Kidney (tissue), 22 donors: ENCODE measurements at regions of chr5 and their contacts with region 1.

Region 1: GRCh38 chr5:112419986-112420864 is 1.1 kb upstream of the EPB41L4A start:
- DNase-seq: peak; percentile 94 to 95 (median 94)
- H3K4me3 ChIP-seq: peak overlapping the region; percentile 68 to 88 (median 86)
- H3K27ac ChIP-seq: peak overlapping the region; percentile 76 to 87
- H3K4me1 ChIP-seq: no peaks in the 10 kb centered on the region
- H3K27me3 ChIP-seq: no peaks in the 10 kb centered on the region
- CTCF ChIP-seq: peak; percentile 89

Region 2: DNA sequence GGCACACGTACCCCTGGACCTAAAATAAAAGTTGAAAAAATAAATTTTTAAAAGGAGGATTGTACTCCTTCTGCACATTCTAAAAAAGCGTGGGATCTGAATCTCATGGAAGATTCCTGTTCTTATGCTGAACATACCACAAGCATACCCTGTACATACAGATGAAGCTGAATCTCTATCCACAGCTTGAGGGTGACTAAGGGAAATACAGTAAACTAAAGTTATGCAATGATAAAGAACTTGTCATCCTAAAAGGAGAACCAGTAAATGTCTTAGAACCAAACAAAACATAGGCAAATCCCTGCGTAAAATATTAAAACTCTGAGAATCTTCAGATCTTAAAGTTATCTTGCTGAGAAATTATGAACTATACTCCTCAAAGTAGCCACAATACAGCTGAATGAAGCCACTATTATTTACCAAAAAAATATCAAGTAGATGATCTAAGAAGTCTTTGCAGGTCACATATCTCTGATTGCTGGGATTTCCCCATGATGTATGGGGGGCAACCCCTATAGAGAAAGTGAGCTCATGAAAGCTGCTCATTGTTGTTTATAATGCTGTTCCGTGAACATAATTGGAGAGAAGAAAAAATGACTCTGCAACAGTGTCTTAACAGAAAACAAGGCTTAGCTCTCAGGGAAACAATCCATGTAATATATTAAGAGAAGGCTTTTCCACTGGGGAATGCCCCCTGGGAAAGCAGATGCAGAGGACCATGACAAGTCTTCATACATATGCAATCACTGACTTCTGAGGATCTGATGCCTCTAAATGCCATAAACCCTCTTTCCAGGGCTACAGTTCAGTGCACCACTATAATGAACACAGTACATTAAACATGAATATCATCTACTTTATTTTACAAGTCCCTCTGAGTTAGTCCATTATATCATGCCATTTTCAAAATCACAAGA is 211.3 kb before region 1 on chr5:
- intact Hi-C with region 1: loop called (anchors 10 kb)
- DNase-seq: peak in 3 of 5 donors; percentile 28 to 62 (median 58)
- H3K4me3 ChIP-seq: no peak overlapping the region
- H3K27ac ChIP-seq: no peak overlapping the region
- H3K4me1 ChIP-seq: no peaks in the 10 kb centered on the region
- H3K27me3 ChIP-seq: no peaks in the 10 kb centered on the region
- CTCF ChIP-seq: no peak

Region 3: DNA sequence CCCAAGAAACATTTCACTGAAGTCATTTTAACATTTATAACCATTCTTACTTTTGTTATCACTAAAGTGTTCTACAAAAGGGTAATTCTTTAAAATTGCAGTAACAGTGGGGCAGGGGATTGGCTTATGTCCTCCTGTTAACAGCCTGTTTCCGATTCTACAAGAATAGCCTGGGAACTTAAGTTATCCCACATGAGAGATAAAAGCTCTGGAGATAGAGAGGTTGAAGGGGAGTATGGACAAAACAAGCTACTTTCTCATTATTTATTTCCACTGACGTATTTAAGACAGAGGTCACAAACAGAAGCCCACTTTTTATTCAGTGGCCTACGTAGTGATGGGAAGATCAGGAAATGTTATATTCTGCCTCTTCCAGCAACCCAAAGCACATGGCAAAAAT is 99.8 kb before region 1 on chr5:
- intact Hi-C with region 1: no loop called
- DNase-seq: peak in 2 of 5 donors; percentile 24 to 25
- H3K4me3 ChIP-seq: no peak overlapping the region
- H3K27ac ChIP-seq: no peak overlapping the region
- H3K4me1 ChIP-seq: peaks cover 0 to 3% (median 0%) of the 10 kb centered on the region in 3 donors
- H3K27me3 ChIP-seq: no peaks in the 10 kb centered on the region
- CTCF ChIP-seq: no peak

Region 4: DNA sequence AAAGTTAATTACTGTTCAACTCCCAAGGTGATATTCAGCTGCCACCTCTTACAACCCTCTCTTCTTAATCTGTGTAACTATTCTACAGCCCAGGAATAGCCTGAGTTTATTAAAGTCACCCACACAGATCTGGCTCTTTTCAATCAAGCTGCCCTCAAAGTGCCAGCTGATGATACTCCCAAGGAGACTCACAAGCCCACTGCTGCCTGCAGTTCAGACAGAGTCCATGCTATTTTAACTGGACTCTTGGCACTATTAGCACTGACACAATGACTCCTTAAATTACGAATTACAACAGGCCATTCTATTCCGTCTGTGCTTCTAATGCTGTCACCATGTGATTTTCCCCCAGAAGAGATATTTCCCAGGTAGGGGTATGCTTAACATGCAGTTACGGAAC is 475.5 kb after region 1 on chr5:
- intact Hi-C with region 1: no loop called
- DNase-seq: no peak
- H3K4me3 ChIP-seq: no peak overlapping the region
- H3K27ac ChIP-seq: no peak overlapping the region
- H3K4me1 ChIP-seq: no peaks in the 10 kb centered on the region
- H3K27me3 ChIP-seq: no peaks in the 10 kb centered on the region
- CTCF ChIP-seq: no peak